ENCODE measurements at regions of chr3 and their contacts with region 1.

Region 1: DNA sequence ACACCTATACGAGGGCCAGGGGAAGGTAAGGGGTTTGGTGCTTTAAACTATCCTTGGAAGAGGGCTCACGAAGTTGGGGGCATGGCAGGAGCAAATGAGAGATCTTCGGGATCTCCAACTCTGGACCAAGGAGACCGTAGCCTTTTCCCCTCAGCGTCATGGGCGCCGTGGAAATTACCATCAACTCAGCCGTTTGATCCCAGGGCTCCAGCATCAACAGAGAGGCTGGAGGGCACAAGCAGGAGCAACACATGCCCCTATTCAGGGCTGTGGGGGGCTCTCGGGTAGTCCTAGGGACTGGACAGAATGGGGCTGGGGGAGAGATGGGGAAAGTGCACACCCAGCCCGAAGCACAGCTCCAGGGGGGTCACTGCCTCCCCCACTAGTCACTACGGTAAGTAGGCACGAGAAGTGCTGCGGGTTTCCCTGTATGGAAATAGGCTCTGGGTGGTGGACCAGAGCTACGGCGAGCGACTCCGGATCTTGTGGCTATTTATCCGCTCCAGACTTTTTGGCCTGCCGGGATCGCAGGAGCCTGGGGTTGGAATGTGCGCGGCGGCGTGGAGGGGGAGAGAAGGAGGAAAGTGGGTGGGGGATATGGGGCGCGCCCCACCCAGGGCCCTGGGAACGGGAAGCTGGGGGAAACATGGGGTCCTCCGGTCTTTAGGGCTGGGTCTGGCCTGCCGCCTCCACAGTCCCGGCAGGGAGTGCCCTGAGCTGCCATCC is 539 bp upstream of the LAMB2 start:
- DNase-seq: peak; percentile 90 to 95 (median 95)
- ATAC-seq: peak; percentile 85 to 87
- H3K4me3 ChIP-seq: peak overlapping the region; percentile 77
- H3K27ac ChIP-seq: peak overlapping the region; percentile 94
- H3K4me1 ChIP-seq: peaks cover 12% of the 10 kb centered on the region
- H3K27me3 ChIP-seq: no peaks in the 10 kb centered on the region

Region 2: DNA sequence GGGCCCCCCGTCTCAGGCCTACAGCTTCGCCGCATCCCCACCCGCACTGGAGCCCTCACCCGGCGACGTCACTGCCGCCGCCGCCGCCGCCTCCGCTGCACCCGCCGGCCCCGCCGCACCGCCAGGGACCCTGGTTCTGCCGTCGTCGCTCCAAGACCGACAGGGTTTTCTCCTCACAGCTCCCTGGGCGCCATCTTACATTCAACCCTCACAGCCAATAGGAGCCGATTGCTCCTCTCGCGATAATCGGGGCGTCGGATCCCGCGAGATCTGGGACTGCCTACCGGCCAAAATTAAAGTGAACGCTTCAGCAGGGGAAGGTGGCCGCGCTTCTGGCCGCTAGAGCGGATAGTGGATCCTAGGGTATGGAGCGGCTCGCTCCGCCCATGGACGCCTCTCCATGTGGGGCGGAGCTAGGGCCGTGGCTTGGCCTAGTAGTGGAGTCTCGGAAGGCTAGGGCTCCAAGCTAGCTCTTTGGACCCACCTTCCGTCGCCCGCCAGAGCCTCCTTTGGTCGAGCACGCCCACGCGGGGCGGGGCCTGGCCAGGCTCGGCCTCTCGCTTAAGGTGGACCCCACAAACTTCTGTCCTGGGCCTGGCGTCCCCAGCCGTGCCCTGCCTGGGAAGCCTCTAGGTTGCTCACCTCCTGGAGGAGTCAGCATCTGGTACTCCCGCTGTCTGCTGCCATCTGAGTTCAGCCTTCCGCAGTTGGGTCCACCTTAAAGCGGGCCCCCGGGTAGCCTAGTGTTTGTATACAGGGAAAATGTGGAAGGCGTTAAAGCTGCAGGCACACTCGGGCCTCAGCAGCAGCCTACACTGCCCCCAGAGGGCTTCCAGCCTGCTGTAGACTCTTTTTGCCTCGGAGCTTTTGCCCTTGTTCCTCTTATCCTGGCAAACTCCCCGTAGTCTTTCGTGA is 39.3 kb before region 1 on chr3 and contains the start of gene QRICH1:
- intact Hi-C with region 1: loop called in 1 of 4 experiments (anchors 2 kb)
- DNase-seq: peak; percentile 97 to 99 (median 99)
- ATAC-seq: peak; percentile 94 to 96
- H3K4me3 ChIP-seq: peak within 1 kb of the TSS; percentile 84
- H3K27ac ChIP-seq: peak within 1 kb of the TSS; percentile 91
- H3K4me1 ChIP-seq: peaks cover 2% of the 10 kb centered on the region
- H3K27me3 ChIP-seq: no peaks in the 10 kb centered on the region
- total RNA-seq, gene QRICH1: 59.2 to 74.7 (median 65.9) TPM